Heart right ventricle (tissue), 16 donors: ENCODE measurements at regions of chr3 and their contacts with region 1.

Region 1: DNA sequence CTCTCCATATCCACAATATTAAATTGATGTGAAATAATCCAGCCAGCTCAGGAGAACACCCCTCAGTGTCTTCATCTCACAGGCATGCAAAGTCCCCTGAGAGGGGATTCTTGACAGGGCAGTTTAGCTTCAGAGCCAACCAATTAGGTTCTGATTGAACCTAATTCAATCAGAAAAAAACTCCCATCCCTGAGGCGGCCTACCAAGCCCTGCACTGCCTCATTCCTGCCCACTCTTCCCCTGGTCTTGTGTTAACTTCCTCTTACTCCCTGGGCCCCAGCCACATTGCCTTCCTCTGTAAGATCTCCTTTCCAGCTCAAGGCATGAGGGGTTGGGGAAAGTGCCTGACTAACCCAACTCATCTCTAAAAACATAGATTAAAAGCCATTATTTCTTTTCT is 46.1 kb downstream of the FRMD4B start:
- DNase-seq: peak in 1 of 2 donors; percentile 32
- ATAC-seq: peak in 6 of 8 donors; percentile 54 to 74 (median 64)
- H3K4me3 ChIP-seq: no peak overlapping the region
- H3K27ac ChIP-seq: peak overlapping the region in 7 of 10 donors; percentile 15 to 70 (median 45)
- H3K4me1 ChIP-seq: peaks cover 0 to 52% (median 25%) of the 10 kb centered on the region in 9 donors
- H3K27me3 ChIP-seq: no peaks in the 10 kb centered on the region
- CTCF ChIP-seq: no peak

Region 2: DNA sequence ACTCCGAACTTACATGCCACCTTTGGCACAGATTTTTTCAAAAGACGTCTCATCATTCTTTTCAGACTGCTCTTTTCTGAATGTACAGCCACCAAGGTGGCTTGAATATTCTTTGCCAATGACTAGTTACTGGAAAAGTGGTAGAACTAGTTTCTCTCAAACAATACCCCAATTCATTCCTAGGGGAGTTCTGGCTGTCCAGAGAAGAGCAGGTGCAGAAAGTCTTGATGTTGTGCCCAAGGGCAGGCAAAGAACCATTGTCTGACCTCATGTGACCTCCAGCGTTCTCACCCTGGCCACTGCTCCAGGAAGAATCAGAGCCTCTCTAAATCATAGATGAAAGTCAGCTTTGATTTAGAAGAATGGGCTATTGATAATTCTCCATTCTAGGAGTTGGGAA is 222.9 kb before region 1 on chr3:
- intact Hi-C with region 1: no loop called
- DNase-seq: no peak
- ATAC-seq: peak in 3 of 8 donors; percentile 36 to 55 (median 43)
- H3K4me3 ChIP-seq: peak overlapping the region in 9 of 10 donors; percentile 4 to 40 (median 21)
- H3K27ac ChIP-seq: peak overlapping the region; percentile 24 to 87 (median 70)
- H3K4me1 ChIP-seq: peaks cover 0 to 33% (median 18%) of the 10 kb centered on the region in 9 donors
- H3K27me3 ChIP-seq: no peaks in the 10 kb centered on the region
- CTCF ChIP-seq: no peak

Region 3: DNA sequence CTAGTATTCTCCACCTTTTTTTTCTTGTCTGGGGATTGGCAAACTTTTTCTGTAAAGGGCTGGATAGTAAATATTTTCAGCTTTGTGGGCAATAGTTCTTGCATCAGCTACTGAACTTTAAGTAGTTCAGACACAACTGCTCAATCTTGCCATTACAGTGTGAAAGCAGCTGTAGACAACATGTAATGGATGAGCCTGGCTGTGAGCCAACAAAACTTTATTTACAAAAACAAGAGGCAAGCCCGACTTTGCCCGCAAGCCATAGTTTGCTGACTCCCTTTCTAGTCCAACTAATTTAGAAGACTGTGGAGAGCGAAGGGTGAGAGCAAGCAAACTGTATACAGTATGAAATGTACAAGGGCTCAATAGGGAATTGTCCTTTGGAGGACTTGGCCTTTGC is 39.9 kb after region 1 on chr3:
- intact Hi-C with region 1: loop called in 1 of 10 experiments (anchors 5 kb)
- DNase-seq: no peak
- ATAC-seq: no peak
- H3K4me3 ChIP-seq: no peak overlapping the region
- H3K27ac ChIP-seq: peak overlapping the region in 1 of 10 donors; percentile 42
- H3K4me1 ChIP-seq: peaks cover 0 to 23% (median 3%) of the 10 kb centered on the region in 9 donors
- H3K27me3 ChIP-seq: peaks cover 0 to 7% (median 0%) of the 10 kb centered on the region in 7 donors
- CTCF ChIP-seq: no peak

Region 4: DNA sequence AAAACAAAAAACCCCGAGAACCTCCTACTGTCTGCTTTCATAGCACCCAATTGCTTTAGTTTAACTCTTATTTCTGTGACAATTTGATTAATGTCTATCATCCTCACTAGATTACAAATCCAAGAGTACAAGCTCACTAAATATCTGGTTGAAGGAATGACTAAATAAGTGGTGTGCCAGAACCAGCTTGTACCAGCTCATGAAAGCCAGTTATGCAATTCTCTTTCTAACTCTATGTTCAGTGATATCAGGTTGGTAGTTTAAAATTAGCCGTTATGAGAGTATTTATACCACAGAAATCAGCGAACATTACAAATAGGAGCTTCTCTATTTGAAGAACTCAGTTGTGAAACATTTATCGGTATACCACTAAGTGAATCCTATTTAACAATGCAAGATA is 262.4 kb after region 1 on chr3:
- intact Hi-C with region 1: no loop called
- DNase-seq: no peak
- ATAC-seq: peak in 2 of 8 donors; percentile 72 to 78
- H3K4me3 ChIP-seq: no peak overlapping the region
- H3K27ac ChIP-seq: peak overlapping the region in 1 of 10 donors; percentile 17
- H3K4me1 ChIP-seq: no peaks in the 10 kb centered on the region
- H3K27me3 ChIP-seq: no peaks in the 10 kb centered on the region
- CTCF ChIP-seq: no peak